ENCODE measurements at regions of chrX and their contacts with region 1.

Region 1: DNA sequence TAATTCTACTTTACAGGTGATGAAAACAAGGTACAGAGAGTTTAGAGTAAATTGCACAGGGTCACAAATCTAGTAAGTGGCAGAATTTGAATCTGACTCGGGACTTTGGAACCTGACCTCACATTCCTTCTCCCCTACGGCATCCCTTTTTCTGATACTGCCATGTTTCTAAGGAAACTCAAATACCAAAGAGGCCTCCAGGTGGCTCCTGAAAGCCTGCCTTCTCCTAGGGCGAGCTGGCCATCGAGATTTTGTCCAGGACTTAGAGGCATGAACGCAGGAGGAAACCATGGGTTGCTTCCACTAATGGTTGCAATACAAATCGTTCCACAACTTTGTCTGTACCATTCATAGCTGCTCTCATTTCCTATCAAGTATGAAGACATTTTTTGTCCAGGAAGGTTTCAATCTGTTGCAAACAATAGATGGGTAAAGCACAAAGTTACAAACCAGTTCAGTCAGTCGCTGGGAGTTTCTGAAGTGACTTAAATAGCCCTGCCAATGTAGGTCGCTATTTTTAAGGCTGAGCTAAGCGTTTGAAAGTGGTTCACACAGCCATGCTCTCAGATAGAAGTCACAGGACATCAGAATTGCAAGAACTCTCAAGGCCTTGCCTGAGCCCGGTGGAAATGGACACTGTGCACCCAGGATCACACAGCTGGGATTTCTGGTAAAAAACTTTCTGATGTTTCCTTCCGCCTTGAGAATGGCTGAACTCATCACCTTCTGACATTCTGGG is 296.6 kb upstream of the PRPS2 start:
- DNase-seq: no peak
- H3K4me3 ChIP-seq: no peak overlapping the region
- H3K27ac ChIP-seq: no peak overlapping the region
- H3K4me1 ChIP-seq: no peaks in the 10 kb centered on the region
- H3K27me3 ChIP-seq: no peaks in the 10 kb centered on the region
- CTCF ChIP-seq: no peak
- EP300 ChIP-seq: no peak
- POLR2A ChIP-seq: no peak
- RAD21 ChIP-seq: peak in 1 of 2 experiments; percentile 4; a peak in 1 of 4 replicates

Region 2: GRCh38 chrX:12701628-12702027 is 207.1 kb after region 1 on chrX:
- CTCF ChIA-PET with region 1: interaction called, 20 read pairs
- POLR2A ChIA-PET with region 1: no interaction called
- DNase-seq: peak; percentile 9 to 55
- H3K4me3 ChIP-seq: no peak overlapping the region
- H3K27ac ChIP-seq: no peak overlapping the region
- H3K4me1 ChIP-seq: no peaks in the 10 kb centered on the region
- H3K27me3 ChIP-seq: no peaks in the 10 kb centered on the region
- CTCF ChIP-seq: peak; percentile 45 to 65 (median 56)
- EP300 ChIP-seq: no peak
- POLR2A ChIP-seq: no peak
- RAD21 ChIP-seq: peak; percentile 74 to 84

Measured in H1 (cell line).